ENCODE measurements at regions of chr5 and their contacts with region 1.

Region 1: GRCh38 chr5:113678924-113679575 is 165.6 kb downstream of the YTHDC2 start:
- DNase-seq: peak; percentile 39
- H3K4me3 ChIP-seq: no peak overlapping the region
- H3K27ac ChIP-seq: no peak overlapping the region
- H3K4me1 ChIP-seq: no peaks in the 10 kb centered on the region
- H3K27me3 ChIP-seq: no peaks in the 10 kb centered on the region
- CTCF ChIP-seq: peak; percentile 78
- EP300 ChIP-seq: no peak
- RAD21 ChIP-seq: peak; percentile 86

Region 2: DNA sequence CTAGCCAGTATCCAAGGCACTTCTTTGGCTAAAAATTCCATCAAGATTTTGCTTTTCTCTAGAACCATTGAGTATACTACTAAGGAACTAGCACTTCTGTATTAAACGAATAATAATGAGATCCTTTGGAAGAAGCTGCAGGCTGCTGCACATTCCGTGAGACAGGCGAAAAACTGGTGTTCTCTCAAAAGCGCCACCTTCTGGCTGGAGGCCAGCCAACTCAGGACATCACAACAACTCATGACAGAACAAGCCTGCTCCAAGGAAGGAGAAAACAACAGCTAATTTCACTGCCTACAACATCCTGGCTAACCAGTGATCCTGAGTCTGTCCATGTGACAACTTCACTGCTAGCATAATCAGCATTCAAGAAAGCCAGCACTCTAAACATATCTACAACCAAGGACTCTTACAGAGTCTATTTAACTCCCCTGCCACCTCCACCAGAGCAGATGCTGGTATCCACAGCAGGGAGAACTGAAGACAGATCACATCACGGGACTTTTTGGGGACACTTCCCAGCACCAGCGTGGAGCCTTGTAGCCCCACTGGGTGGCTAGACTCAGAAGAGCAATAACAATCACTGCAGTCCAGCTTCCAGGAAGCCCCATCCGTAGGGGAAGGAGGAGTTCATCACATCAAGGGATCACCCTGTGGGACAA is 15.0 kb before region 1 on chr5:
- CTCF ChIA-PET with region 1: interaction called, 11 read pairs
- POLR2A ChIA-PET with region 1: no interaction called
- DNase-seq: peak; percentile 15
- H3K4me3 ChIP-seq: no peak overlapping the region
- H3K27ac ChIP-seq: no peak overlapping the region
- H3K4me1 ChIP-seq: no peaks in the 10 kb centered on the region
- H3K27me3 ChIP-seq: no peaks in the 10 kb centered on the region
- CTCF ChIP-seq: peak; percentile 60
- EP300 ChIP-seq: no peak
- RAD21 ChIP-seq: peak; percentile 42

Region 3: GRCh38 chr5:113735751-113736150 is 56.7 kb after region 1 on chr5:
- CTCF ChIA-PET with region 1: no interaction called
- POLR2A ChIA-PET with region 1: no interaction called
- DNase-seq: no peak
- H3K4me3 ChIP-seq: no peak overlapping the region
- H3K27ac ChIP-seq: no peak overlapping the region
- H3K4me1 ChIP-seq: no peaks in the 10 kb centered on the region
- H3K27me3 ChIP-seq: no peaks in the 10 kb centered on the region
- CTCF ChIP-seq: no peak
- EP300 ChIP-seq: no peak
- RAD21 ChIP-seq: no peak

Region 4: DNA sequence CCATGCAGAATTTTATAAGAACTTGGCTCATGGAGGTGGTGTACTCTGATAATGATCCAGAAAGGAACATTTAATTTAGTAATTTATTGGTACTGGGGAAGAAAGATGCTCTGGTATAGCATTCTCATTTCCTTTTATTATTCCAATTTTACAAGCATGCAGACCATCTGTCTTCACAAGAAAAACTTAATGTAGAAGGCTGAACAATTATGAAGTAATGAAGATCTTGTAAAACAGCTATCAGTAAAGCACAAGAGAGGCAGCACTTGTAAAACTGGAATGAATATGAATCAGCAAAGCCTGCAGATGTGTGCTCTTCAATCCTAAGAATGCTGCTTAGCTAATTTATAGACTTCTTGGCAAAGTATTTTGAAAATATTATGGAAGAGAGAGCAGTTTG is 134.4 kb after region 1 on chr5:
- CTCF ChIA-PET with region 1: no interaction called
- POLR2A ChIA-PET with region 1: no interaction called
- DNase-seq: no peak
- H3K4me3 ChIP-seq: no peak overlapping the region
- H3K27ac ChIP-seq: no peak overlapping the region
- H3K4me1 ChIP-seq: no peaks in the 10 kb centered on the region
- H3K27me3 ChIP-seq: no peaks in the 10 kb centered on the region
- CTCF ChIP-seq: no peak
- EP300 ChIP-seq: no peak
- RAD21 ChIP-seq: no peak